MCF 10A (cell line): ENCODE measurements at regions of chr2 and their contacts with region 1.

Region 1: GRCh38 chr2:231056453-231057424 is at the start of gene PSMD1:
- DNase-seq: peak; percentile 91
- H3K4me3 Mint-ChIP-seq: peak within 1 kb of the TSS; percentile 78
- H3K27ac Mint-ChIP-seq: peak within 1 kb of the TSS; percentile 97
- H3K4me1 Mint-ChIP-seq: peaks cover 36% of the 10 kb centered on the region
- H3K27me3 Mint-ChIP-seq: no peaks in the 10 kb centered on the region
- CTCF ChIP-seq: peak; percentile 90
- total RNA-seq, gene PSMD1: 88.5 and 94.4 TPM in 2 replicates

Region 2: DNA sequence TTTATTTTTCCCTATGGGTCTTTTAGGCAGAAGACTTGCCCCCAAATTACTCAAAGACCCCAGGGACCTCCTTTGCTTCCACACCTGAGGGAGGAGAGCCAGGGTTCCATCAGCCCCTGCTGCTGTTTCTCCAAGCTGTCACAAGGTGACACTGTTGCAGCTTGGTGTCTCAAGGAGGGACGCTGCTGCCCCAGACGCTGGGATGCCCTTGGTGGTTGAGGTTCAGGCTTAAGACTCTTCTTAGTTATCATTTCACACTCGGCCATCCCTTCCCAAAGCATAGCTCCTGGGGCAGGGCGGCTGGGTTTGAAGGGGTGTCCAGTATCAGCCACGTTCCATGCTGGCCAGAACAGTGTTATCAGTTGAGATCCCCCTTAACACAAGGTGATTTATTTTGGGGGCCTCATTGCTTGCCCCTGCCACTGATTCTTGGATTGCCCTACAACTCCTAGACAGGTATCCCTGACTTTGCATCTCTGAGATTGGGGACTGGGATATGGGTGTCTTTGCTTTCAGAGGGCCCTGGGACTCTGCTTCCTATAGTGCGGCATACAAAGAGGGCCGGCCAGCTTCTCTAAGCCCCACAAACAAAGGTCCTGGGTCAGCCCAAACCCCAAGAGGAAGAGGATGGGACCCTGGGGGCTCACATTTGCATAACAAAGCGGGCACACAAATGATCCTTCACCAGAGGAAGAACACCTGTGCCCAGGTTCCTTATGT is 154.4 kb before region 1 on chr2:
- CTCF ChIA-PET with region 1: interaction called, 4 read pairs
- POLR2A ChIA-PET with region 1: interaction called, 3 read pairs
- intact Hi-C with region 1: loop called (anchors 1 kb)
- DNase-seq: peak; percentile 75
- H3K4me3 Mint-ChIP-seq: no peak overlapping the region
- H3K27ac Mint-ChIP-seq: no peak overlapping the region
- H3K4me1 Mint-ChIP-seq: no peaks in the 10 kb centered on the region
- H3K27me3 Mint-ChIP-seq: peaks cover 33% of the 10 kb centered on the region
- CTCF ChIP-seq: peak; percentile 89

Region 3: GRCh38 chr2:230913406-230914143 is 143.2 kb before region 1 on chr2:
- CTCF ChIA-PET with region 1: interaction called, 4 read pairs
- POLR2A ChIA-PET with region 1: interaction called, 4 read pairs
- intact Hi-C with region 1: loop called (anchors 2 kb)
- DNase-seq: peak; percentile 32
- H3K4me3 Mint-ChIP-seq: no peak overlapping the region
- H3K27ac Mint-ChIP-seq: no peak overlapping the region
- H3K4me1 Mint-ChIP-seq: peaks cover 9% of the 10 kb centered on the region
- H3K27me3 Mint-ChIP-seq: peaks cover 52% of the 10 kb centered on the region
- CTCF ChIP-seq: peak; percentile 20

Region 4: GRCh38 chr2:231043796-231044195 is 12.9 kb before region 1 on chr2:
- CTCF ChIA-PET with region 1: interaction called, 16 read pairs
- POLR2A ChIA-PET with region 1: no interaction called
- intact Hi-C with region 1: no loop called
- DNase-seq: no peak
- H3K4me3 Mint-ChIP-seq: no peak overlapping the region
- H3K27ac Mint-ChIP-seq: no peak overlapping the region
- H3K4me1 Mint-ChIP-seq: no peaks in the 10 kb centered on the region
- H3K27me3 Mint-ChIP-seq: peaks cover 36% of the 10 kb centered on the region
- CTCF ChIP-seq: no peak